Activated naive CD4-positive, alpha-beta T cell treated with anti-CD3 and anti-CD28 coated beads, Interleukin-2, amount 10 ng/mL, durations not matched to agents 7 days and 5 days (primary cell): ENCODE measurements at regions of chr6 and their contacts with region 1.

Region 1: DNA sequence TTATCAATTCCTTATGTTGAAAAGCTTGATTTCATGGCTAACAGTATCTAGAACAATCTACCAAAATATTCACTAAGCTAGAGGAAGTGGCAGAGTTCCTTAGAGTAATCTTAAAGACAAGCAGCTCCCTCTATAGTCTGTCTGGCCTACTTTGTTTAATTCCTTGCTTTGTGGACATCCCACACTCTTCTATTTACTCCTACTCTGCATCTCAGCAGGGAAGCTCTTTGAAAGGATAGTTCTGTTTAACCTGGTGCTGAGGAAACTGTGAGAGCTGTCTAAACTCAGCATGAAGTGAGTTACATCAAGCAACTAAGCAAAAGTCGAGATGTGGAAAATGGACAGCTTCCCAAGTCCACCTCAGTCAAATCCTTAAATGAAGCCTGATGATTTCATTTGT is 4.3 kb downstream of the REV3L start:
- DNase-seq: no peak
- H3K4me3 Mint-ChIP-seq: no peak overlapping the region
- H3K27ac Mint-ChIP-seq: peak overlapping the region; percentile 72
- H3K4me1 Mint-ChIP-seq: peaks cover 31% of the 10 kb centered on the region
- H3K27me3 Mint-ChIP-seq: no peaks in the 10 kb centered on the region

Region 2: DNA sequence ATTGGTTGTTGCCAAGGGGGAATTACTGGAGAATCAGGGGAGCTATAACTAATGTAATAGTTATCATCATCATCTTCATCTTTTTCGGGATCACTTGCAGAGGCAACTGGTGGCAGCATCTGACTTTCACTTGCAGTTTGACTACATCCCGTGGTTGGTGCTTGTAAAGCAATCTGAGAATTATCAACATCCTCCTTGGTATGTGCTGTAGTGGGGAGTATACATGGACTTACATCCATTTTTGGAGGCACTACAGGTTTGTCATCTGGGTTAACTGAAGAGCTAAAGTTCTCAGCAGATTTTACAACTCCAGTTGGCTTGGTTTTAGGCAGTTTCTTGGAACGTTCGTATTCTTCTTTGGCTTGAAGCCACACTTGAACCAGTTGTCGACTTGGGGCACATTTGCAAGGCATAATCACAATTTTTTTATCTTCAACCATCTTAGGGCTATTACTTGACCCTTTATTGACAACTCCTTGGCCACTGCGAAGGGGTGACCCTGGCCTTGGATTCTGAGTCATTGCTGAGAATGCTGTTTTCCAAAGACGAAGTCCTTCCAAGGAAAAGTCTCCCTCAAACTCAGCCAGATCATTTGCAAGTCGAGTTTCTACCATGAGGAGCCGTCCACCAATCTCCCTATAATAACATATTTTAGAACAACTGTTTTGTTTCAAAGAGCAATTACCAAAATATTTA is 111.2 kb before region 1 on chr6:
- CTCF ChIA-PET with region 1: interaction called, 11 read pairs
- DNase-seq: no peak
- H3K4me3 Mint-ChIP-seq: no peak overlapping the region
- H3K27ac Mint-ChIP-seq: no peak overlapping the region
- H3K4me1 Mint-ChIP-seq: peaks cover 13% of the 10 kb centered on the region
- H3K27me3 Mint-ChIP-seq: no peaks in the 10 kb centered on the region

Region 3: DNA sequence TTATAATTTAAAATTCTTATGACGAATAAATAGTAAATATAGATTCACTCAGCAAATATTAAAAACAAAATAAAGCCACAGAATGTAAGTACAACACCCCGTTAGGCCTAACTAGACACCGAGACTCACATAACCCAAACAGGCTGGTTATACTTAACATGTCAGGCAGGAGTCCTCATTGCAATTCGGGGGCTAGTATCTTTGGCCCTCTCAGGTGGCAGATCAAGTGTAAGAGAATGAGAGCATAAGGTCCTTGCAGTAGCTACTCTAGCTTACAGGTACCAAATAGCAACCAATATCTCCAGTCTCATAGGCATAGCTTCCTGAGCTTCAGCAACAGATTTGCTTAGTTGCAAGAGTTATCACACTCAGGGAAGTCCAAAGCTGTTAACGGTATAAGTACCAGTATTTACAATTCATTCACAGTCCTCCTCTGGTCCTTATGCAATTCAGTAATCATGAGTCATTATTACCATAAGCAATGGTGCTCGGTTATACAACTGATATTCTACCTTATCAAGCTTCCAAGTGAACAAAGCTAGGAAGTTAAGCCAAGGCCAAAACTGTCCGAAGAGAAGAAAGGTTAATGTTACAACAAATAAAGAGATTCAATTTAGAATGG is 15.9 kb before region 1 on chr6:
- CTCF ChIA-PET with region 1: interaction called, 14 read pairs
- DNase-seq: no peak
- H3K4me3 Mint-ChIP-seq: no peak overlapping the region
- H3K27ac Mint-ChIP-seq: no peak overlapping the region
- H3K4me1 Mint-ChIP-seq: peaks cover 16% of the 10 kb centered on the region
- H3K27me3 Mint-ChIP-seq: no peaks in the 10 kb centered on the region